Activated CD8-positive, alpha-beta memory T cell treated with anti-CD3 and anti-CD28 coated beads, Interleukin-2, amount 10 ng/mL, durations not matched to agents 7 days and 5 days (primary cell): ENCODE measurements at regions of chr10 and their contacts with region 1.

Region 1: DNA sequence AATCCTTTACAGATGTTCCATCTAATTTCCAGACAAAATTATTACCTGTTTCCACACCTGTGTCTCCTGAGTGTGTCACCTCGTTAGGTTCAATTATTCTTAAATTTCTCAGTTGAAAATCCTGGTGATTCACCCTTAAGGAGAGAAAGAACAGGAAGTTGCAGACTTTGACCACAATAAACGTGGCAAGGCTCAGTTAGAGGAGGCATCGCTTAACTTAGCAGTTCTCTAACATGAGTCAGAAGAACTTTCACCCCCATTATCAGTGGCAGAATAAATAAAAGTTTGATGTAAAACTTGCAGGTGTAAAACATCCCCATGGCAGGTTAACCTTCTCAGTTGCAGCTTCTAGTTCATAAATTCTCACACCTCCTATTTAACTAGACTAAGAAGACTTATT is 8.3 kb downstream of the XPNPEP1 start:
- DNase-seq: peak; percentile 67
- ATAC-seq: peak; percentile 76
- H3K4me3 Mint-ChIP-seq: peak overlapping the region; percentile 35
- H3K27ac Mint-ChIP-seq: peak overlapping the region; percentile 76
- H3K4me1 Mint-ChIP-seq: peaks cover 82% of the 10 kb centered on the region
- H3K27me3 Mint-ChIP-seq: no peaks in the 10 kb centered on the region

Region 2: GRCh38 chr10:109934958-109935706 is 20.2 kb after region 1 on chr10:
- CTCF ChIA-PET with region 1: interaction called, 14 read pairs
- DNase-seq: peak; percentile 45
- ATAC-seq: peak; percentile 38
- H3K4me3 Mint-ChIP-seq: peak overlapping the region; percentile 63
- H3K27ac Mint-ChIP-seq: peak overlapping the region; percentile 94
- H3K4me1 Mint-ChIP-seq: peaks cover 40% of the 10 kb centered on the region
- H3K27me3 Mint-ChIP-seq: peaks cover 3% of the 10 kb centered on the region